ENCODE measurements at regions of chr5 and their contacts with region 1.

Region 1: GRCh38 chr5:132500931-132501630 is 10.5 kb upstream of the IRF1 start:
- DNase-seq: no peak
- H3K4me3 ChIP-seq: no peak overlapping the region
- CTCF ChIP-seq: peak; percentile 76

Region 2: GRCh38 chr5:132354381-132355139 is 146.5 kb before region 1 on chr5:
- CTCF ChIA-PET with region 1: no interaction called
- POLR2A ChIA-PET with region 1: no interaction called
- DNase-seq: no peak
- H3K4me3 ChIP-seq: no peak overlapping the region
- CTCF ChIP-seq: no peak

Region 3: DNA sequence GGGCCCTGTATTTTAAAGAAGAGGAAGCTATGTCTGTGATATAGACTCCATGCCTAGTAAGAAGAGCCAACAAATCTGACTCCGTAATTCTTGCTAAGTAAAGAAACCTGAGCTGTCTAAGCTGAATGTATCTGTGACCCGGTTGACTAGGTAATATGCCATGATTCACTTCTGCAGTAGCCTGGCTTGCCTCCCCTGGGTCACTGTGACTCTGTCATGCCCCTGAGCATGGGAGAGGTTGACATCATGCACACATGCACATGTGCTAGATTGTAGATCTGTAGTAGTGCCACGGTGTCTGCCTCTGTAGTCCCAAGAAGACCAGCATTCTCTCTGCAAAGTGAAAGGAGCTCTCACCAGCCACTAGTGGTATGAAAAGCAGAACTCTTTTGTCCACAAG is 122.5 kb before region 1 on chr5:
- CTCF ChIA-PET with region 1: interaction called, 610 read pairs
- POLR2A ChIA-PET with region 1: no interaction called
- DNase-seq: no peak
- H3K4me3 ChIP-seq: no peak overlapping the region
- CTCF ChIP-seq: no peak

Region 4: GRCh38 chr5:132419502-132420468 is 81.3 kb before region 1 on chr5:
- CTCF ChIA-PET with region 1: interaction called, 109 read pairs
- POLR2A ChIA-PET with region 1: interaction called, 24 read pairs
- DNase-seq: no peak
- H3K4me3 ChIP-seq: no peak overlapping the region
- CTCF ChIP-seq: peak; percentile 87

Region 5: DNA sequence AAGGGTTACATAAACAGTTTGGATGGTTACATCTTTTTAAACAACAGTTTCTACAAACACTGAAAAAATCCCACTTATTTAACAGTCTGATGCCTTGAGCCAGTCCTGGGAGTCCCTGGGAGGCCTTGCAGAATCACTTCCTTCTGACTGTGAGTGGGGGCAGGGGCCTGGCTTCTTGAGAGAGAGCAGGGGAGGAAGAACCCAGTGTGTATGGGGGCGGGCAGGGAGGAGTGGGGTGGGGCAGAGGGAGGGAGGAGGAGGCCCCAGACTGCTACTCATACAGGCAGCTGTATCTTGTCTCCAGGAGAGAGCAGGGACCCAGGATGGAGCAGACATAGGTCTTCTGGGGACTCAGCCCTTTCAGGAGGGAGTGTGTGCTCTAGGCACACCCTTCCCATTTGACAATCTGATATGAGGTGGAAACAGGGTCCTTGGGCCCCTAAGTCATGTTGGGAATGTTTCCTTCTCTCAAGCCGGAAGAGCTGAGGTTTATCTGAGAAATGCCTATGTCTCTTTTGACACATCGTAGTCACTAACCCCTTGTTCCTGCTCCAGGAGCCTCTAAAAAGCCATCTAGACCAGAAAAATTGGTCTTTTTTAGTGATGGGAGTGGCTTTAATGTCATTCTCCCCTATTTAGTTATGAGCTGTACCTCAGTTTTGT is 63.3 kb before region 1 on chr5:
- CTCF ChIA-PET with region 1: interaction called, 18 read pairs
- POLR2A ChIA-PET with region 1: interaction called, 5 read pairs
- DNase-seq: peak; percentile 85
- H3K4me3 ChIP-seq: no peak overlapping the region
- CTCF ChIP-seq: no peak

Region 6: DNA sequence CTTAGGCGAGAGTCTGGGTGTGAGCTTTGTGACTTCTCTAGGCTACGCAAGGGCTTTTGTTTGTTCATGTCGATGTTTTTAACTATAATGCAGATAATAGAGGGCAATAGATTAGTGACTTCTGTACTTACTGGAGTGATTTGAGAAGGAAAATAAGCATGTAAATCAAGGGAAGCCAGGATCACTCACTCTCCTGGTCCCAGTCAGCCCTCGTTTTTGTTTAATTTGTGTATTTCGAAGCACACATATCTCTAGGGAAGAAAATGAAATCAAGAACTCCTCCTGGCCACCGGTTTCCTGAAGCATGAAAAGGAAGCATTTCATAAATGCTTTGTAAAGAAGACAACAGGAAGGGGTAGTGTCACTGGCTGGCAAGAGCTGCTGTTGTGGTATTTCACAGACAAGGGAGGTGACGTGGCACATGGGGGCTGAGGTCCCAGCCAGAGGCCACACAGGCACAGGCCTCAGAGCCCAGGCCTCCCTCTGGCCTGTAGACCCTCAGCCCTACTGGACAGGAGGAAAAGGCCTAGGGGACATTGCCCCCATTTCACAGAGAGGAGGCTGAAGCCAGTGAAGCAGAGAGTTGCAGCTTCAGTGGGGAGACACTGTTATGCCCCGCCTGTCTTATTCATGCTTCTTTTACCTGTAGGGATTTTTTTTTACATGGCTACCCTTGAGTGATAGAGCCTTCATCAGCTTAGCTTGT is 44.6 kb before region 1 on chr5:
- CTCF ChIA-PET with region 1: interaction called, 20 read pairs
- POLR2A ChIA-PET with region 1: interaction called, 3 read pairs
- DNase-seq: no peak
- H3K4me3 ChIP-seq: no peak overlapping the region
- CTCF ChIP-seq: no peak

Region 7: DNA sequence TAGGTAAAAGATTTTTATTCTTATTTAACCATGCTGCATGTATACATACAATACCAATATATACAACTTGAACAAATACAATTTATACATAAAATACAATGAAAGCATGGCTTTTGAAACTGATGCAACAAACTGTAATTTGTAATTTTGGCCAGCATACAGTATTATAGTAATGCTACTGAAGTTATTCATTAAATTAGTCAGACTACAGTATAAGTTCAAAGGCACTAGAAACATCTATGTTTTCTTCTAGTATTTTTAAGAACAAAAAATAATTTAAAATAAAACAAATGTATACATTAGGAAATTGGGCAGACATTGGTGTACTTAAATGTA is 191.5 kb after region 1 on chr5:
- CTCF ChIA-PET with region 1: no interaction called
- POLR2A ChIA-PET with region 1: no interaction called
- DNase-seq: no peak
- H3K4me3 ChIP-seq: no peak overlapping the region
- CTCF ChIP-seq: no peak